ENCODE measurements at regions of chr10 and their contacts with region 1.

Region 1: DNA sequence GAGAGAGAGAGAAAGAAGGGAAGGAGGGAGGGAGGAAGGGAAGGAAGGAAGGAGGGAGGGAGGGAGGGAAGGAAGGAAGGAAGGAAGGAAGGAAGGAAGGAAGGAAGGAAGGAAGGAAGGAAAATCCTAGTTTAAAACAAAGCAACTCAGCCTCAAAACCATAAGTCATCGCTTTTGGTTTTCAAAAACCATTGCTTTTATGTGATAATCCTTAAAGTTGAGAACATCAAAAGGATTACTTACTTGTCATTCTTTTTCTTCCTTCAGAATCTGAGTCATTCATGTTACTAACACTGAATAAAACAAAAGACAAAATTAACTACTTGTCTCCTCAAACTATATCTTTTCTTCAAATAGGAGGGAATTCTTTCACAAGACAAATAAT is 21.6 kb upstream of the PDSS1 start:
- DNase-seq: no peak
- ATAC-seq: no peak
- H3K4me3 ChIP-seq: no peak overlapping the region
- H3K4me3 Mint-ChIP-seq: no peak overlapping the region
- H3K27ac ChIP-seq: no peak overlapping the region
- H3K27ac Mint-ChIP-seq: peak overlapping the region in 1 of 2 donors; percentile 22
- H3K4me1 ChIP-seq: no peaks in the 10 kb centered on the region
- H3K4me1 Mint-ChIP-seq: peaks cover 0 to 2% (median 0%) of the 10 kb centered on the region in 3 donors
- H3K27me3 ChIP-seq: peaks cover 0 to 3% of the 10 kb centered on the region in 2 experiments
- H3K27me3 Mint-ChIP-seq: peaks cover 0 to 2% of the 10 kb centered on the region in 2 donors

Region 2: DNA sequence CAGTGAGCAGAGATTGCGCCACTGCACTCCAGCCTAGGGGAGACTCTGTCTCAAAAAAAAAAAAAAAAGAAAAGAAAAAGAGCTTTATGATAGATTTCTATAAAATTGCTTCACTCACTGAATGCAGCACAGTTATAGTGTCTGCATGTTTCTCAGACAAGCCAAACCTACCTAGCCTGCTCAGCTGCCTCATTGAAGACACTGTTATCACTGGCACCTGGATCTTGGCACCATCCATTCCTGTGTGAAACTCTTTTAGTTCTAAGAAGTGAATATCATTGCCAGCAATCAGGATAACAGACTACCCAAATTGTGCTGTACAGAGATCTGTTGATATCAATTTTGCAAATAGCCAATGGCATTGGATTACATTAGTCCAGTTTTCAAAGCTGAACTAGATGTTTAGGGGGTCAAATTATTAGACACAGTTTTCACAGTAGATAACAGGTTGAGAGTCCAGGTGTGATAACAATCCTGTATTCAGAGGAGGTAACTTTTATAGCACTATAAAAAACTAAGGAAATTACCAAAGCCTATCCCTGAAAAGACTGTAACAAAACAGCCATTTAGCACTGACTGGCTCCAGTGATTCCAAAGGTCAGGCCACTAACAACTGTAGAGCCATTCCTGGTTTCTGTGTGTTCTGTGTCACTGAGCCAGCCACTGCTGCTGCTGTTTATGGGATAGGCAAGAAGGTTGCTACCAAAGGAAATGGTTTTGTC is 38.7 kb after region 1 on chr10:
- CTCF ChIA-PET with region 1: no interaction called
- POLR2A ChIA-PET with region 1: interaction called in 1 of 2 experiments, 10 read pairs
- DNase-seq: no peak
- ATAC-seq: no peak
- H3K4me3 ChIP-seq: no peak overlapping the region
- H3K4me3 Mint-ChIP-seq: no peak overlapping the region
- H3K27ac ChIP-seq: no peak overlapping the region
- H3K27ac Mint-ChIP-seq: no peak overlapping the region
- H3K4me1 ChIP-seq: no peaks in the 10 kb centered on the region
- H3K4me1 Mint-ChIP-seq: peaks cover 0 to 2% (median 0%) of the 10 kb centered on the region in 3 donors
- H3K27me3 ChIP-seq: no peaks in the 10 kb centered on the region
- H3K27me3 Mint-ChIP-seq: no peaks in the 10 kb centered on the region

Measured in T-cell (primary cell).